MCF 10A (cell line): ENCODE measurements at regions of chr18 and their contacts with region 1.

Region 1: GRCh38 chr18:49238433-49239042 is 221.9 kb downstream of the DYM start:
- DNase-seq: peak; percentile 48
- H3K4me3 Mint-ChIP-seq: no peak overlapping the region
- H3K27ac Mint-ChIP-seq: no peak overlapping the region
- H3K4me1 Mint-ChIP-seq: no peaks in the 10 kb centered on the region
- H3K27me3 Mint-ChIP-seq: no peaks in the 10 kb centered on the region
- CTCF ChIP-seq: peak; percentile 51

Region 2: GRCh38 chr18:48367557-48367956 is 871.0 kb before region 1 on chr18:
- CTCF ChIA-PET with region 1: no interaction called
- POLR2A ChIA-PET with region 1: no interaction called
- intact Hi-C with region 1: no loop called
- DNase-seq: no peak
- H3K4me3 Mint-ChIP-seq: no peak overlapping the region
- H3K27ac Mint-ChIP-seq: no peak overlapping the region
- H3K4me1 Mint-ChIP-seq: no peaks in the 10 kb centered on the region
- H3K27me3 Mint-ChIP-seq: no peaks in the 10 kb centered on the region
- CTCF ChIP-seq: no peak

Region 3: DNA sequence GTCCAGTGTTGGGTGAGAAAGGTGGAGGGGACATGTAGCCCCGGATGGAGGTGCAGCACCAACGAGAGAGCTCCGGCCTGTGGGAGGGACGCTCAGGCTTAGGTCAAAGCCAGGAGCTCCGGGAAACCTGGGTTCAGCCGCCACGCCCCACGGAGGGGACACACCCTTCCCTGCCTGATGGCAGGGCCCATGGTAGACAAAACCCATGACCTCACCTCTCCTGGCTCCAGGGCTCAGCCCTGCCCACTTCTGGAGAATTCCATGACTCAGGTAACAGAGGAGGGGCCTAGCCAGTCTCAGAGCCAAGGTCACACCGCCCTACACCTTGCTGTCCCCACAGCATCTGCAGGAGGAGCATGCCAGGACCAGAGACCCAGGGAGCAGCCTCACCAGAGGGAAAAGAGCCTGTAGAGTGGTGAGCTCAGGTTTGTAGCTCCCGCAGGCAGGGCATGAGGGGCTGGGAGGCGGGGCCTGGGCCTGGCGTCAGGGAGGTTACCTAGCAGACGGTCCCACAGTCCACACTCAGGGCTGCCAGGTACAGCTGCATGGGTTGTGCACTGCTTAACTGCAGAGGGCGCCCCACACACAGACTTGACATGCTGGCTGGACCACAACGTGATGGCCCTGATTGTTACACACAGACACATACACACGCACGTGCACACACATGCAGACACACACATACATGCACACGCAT is 217.0 kb before region 1 on chr18:
- CTCF ChIA-PET with region 1: interaction called, 3 read pairs
- POLR2A ChIA-PET with region 1: no interaction called
- intact Hi-C with region 1: loop called (anchors 5 kb)
- DNase-seq: peak; percentile 93
- H3K4me3 Mint-ChIP-seq: peak overlapping the region; percentile 40
- H3K27ac Mint-ChIP-seq: peak overlapping the region; percentile 73
- H3K4me1 Mint-ChIP-seq: peaks cover 19% of the 10 kb centered on the region
- H3K27me3 Mint-ChIP-seq: no peaks in the 10 kb centered on the region
- CTCF ChIP-seq: peak; percentile 23

Region 4: DNA sequence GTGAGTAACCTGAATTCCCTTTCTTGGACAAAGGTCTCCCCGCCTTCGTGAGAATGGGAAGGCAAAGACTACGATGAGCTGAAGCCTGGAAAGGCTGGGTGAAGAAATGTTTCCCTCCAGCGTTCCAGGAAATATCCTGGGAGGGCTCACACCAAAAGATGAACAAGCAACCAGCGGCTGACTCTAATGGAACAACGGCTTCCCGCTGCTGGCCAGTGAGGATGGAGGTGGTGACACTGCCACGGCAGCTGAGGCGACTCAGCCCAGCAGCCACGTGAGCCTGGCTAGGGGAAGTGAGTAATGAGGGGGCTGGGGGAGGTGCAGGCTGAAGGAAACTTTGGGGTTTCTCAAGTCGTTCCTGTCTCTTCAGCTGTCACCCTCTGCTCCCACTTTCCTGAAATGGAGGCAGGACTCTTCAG is 182.8 kb before region 1 on chr18:
- CTCF ChIA-PET with region 1: no interaction called
- POLR2A ChIA-PET with region 1: no interaction called
- intact Hi-C with region 1: no loop called
- DNase-seq: peak; percentile 75
- H3K4me3 Mint-ChIP-seq: peak overlapping the region; percentile 23
- H3K27ac Mint-ChIP-seq: peak overlapping the region; percentile 10
- H3K4me1 Mint-ChIP-seq: peaks cover 5% of the 10 kb centered on the region
- H3K27me3 Mint-ChIP-seq: no peaks in the 10 kb centered on the region
- CTCF ChIP-seq: no peak

Region 5: GRCh38 chr18:49151482-49151881 is 87.1 kb before region 1 on chr18:
- CTCF ChIA-PET with region 1: no interaction called
- POLR2A ChIA-PET with region 1: no interaction called
- intact Hi-C with region 1: no loop called
- DNase-seq: no peak
- H3K4me3 Mint-ChIP-seq: no peak overlapping the region
- H3K27ac Mint-ChIP-seq: no peak overlapping the region
- H3K4me1 Mint-ChIP-seq: peaks cover 6% of the 10 kb centered on the region
- H3K27me3 Mint-ChIP-seq: no peaks in the 10 kb centered on the region
- CTCF ChIP-seq: no peak

Region 6: DNA sequence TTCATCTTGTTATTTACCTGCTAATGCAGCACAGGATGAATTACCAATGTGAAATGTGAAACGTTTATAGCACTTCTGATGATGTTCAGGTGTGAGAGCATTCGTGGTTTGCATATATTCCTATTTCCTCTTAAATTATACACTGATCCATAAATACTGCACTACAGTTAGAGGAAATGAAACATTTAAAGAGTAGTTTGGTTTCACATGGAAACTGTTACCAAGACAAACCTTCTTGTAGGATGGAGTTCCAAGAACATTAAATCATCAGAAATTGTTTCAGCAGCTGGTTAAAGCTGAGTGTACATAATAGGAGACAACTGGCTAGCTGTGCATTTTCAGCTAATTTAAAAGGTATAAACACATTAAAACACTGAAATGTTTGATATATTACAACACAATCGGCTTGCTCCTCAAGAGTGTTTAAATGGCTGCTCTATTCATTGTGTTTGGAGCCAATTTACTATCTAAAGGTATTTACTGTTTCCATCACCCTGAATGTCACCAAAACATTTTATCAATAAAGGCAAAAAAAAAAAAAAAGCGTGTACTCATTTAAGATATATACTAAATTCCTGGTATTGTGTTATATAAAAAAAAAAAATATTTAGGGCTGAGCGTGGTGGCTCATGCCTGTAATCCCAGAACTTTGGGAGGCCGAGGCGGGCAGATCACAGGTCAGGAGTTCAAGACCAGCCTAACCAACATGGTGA is 121.3 kb after region 1 on chr18:
- CTCF ChIA-PET with region 1: no interaction called
- POLR2A ChIA-PET with region 1: no interaction called
- intact Hi-C with region 1: no loop called
- DNase-seq: no peak
- H3K4me3 Mint-ChIP-seq: no peak overlapping the region
- H3K27ac Mint-ChIP-seq: no peak overlapping the region
- H3K4me1 Mint-ChIP-seq: no peaks in the 10 kb centered on the region
- H3K27me3 Mint-ChIP-seq: no peaks in the 10 kb centered on the region
- CTCF ChIP-seq: no peak